Gastrocnemius medialis (tissue), 4 donors: ENCODE measurements at regions of chr20 and their contacts with region 1.

Region 1: DNA sequence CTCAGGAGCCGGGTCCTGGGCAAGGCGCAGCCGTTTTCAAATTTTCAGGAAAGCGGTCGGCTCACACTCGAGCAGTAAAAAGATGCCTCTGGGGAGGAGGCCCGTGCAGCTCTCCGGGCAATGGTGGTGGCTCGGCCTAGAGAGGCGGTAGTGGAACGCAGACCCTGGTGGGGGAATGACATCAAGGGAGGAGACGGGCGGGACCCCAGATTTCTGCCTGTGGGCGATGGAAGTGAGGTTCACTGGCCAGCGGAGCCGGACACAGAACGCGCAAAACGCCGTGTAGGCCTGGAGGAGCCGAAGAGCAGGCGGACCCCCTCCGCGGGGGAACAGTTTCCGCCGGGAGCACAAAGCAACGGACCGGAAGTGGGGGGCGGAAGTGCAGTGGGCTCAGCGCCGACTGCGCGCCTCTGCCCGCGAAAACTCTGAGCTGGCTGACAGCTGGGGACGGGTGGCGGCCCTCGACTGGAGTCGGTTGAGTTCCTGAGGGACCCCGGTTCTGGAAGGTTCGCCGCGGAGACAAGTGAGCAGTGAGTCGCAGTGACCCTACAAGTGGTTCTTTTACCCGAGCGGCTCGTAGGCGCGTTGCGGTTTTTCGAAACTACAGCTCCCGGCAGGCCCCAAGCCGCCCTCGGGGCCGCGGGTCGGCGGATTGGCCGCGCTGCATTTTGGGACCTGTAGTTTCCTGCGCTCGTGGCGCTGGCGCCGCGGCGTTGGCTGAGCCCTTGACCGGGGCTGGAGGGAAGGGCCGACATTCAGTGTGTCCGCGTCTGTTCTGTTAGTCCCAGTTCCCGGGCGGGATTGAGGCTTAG is at the start of gene RTEL1:
- DNase-seq: peak; percentile 82 to 88
- ATAC-seq: peak; percentile 96 to 97
- H3K4me3 ChIP-seq: peak within 1 kb of the TSS; percentile 78 to 94 (median 89)
- H3K27ac ChIP-seq: peak within 1 kb of the TSS; percentile 91 to 96 (median 92)
- H3K4me1 ChIP-seq: peaks cover 19 to 28% of the 10 kb centered on the region in 2 donors
- H3K27me3 ChIP-seq: peaks cover 0 to 3% (median 0%) of the 10 kb centered on the region in 3 donors
- CTCF ChIP-seq: peak in 2 of 5 experiments; percentile 10 to 24
- POLR2A ChIP-seq: peak; percentile 18 to 34
- total RNA-seq, gene RTEL1: 2.4 to 9.1 (median 6.0) TPM

Region 2: GRCh38 chr20:63602321-63602720 is 55.8 kb before region 1 on chr20:
- in situ Hi-C with region 1: no loop called
- intact Hi-C with region 1: no loop called
- DNase-seq: no peak
- ATAC-seq: no peak
- H3K4me3 ChIP-seq: no peak overlapping the region
- H3K27ac ChIP-seq: no peak overlapping the region
- H3K4me1 ChIP-seq: no peaks in the 10 kb centered on the region
- H3K27me3 ChIP-seq: no peaks in the 10 kb centered on the region
- CTCF ChIP-seq: no peak
- POLR2A ChIP-seq: no peak

Region 3: GRCh38 chr20:63641792-63642544 is 16.2 kb before region 1 on chr20:
- in situ Hi-C with region 1: no loop called
- intact Hi-C with region 1: loop called (anchors 2 kb)
- DNase-seq: peak; percentile 82 to 83
- ATAC-seq: peak; percentile 80 to 82
- H3K4me3 ChIP-seq: peak overlapping the region; percentile 60 to 70 (median 62)
- H3K27ac ChIP-seq: peak overlapping the region; percentile 72 to 78 (median 76)
- H3K4me1 ChIP-seq: peaks cover 9 to 10% of the 10 kb centered on the region in 2 donors
- H3K27me3 ChIP-seq: no peaks in the 10 kb centered on the region
- CTCF ChIP-seq: peak in 4 of 5 experiments; percentile 39 to 67 (median 48)
- POLR2A ChIP-seq: no peak

Region 4: GRCh38 chr20:63707549-63708300 is 49.6 kb after region 1 on chr20 and contains the starts of genes ARFRP1 and ZGPAT:
- in situ Hi-C with region 1: loop called in 1 of 4 experiments (anchors 10 kb)
- intact Hi-C with region 1: no loop called
- DNase-seq: peak; percentile 81 to 86
- ATAC-seq: peak; percentile 93 to 95
- H3K4me3 ChIP-seq: peak within 1 kb of the TSS; percentile 76 to 90 (median 85)
- H3K27ac ChIP-seq: peak within 1 kb of the TSS; percentile 80 to 91 (median 90)
- H3K4me1 ChIP-seq: peaks cover 11 to 23% of the 10 kb centered on the region in 2 donors
- H3K27me3 ChIP-seq: no peaks in the 10 kb centered on the region
- CTCF ChIP-seq: peak in 1 of 5 experiments; percentile 14
- POLR2A ChIP-seq: peak; percentile 53 to 77
- total RNA-seq, gene ARFRP1: 26.9 to 35.1 (median 27.8) TPM
- total RNA-seq, gene ZGPAT: 13.4 to 20.8 (median 15.5) TPM